PC-3 (cell line): ENCODE measurements at regions of chr9 and their contacts with region 1.

Region 1: DNA sequence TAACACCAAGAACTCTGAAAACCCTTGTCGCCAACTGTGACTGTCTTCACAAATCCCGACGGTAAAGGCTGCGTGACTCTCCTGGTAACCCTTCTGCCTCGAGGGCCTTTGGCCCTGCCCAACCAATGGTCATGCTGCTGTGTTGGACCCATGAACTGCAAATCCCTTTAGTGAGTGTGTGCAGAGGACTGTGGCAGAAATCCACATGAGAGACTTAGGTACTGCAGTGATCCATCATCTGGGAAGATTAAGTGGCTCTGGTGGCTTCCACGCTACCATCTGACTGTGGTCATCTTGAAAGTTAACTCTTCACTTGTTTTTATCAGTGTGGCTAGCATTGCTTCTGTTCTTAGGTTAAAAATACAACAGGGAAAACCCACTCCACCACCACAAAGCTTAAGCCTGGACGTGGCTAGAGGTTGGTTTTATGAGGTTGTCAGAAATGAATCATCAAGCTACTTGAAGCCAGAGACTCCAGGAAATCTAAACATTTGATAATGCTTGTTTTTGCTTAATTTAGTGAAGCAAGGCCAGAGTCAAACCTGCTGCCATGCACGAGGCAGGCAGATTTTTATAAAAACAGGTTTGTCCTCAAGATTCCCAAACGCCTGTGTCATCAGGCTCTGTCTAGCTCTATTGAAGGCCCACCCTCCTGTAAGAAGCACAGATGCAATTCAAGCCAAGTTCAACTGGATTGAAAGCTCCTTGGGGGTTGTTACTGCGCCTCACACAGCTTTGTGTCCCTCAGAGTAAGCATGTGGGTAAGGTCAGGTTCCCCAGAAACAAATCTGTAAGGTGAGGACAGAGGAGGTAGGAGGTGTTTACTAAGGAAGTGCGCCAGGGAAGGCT is 52.7 kb upstream of the ERCC6L2 start:
- DNase-seq: peak; percentile 89
- ATAC-seq: peak; percentile 93
- H3K4me3 ChIP-seq: peak overlapping the region; percentile 26; the same call in 1 of the 2 replicates
- H3K27ac ChIP-seq: peak overlapping the region; percentile 66
- H3K4me1 ChIP-seq: peaks cover 25% of the 10 kb centered on the region
- H3K27me3 ChIP-seq: no peaks in the 10 kb centered on the region
- CTCF ChIP-seq: no peak

Region 2: DNA sequence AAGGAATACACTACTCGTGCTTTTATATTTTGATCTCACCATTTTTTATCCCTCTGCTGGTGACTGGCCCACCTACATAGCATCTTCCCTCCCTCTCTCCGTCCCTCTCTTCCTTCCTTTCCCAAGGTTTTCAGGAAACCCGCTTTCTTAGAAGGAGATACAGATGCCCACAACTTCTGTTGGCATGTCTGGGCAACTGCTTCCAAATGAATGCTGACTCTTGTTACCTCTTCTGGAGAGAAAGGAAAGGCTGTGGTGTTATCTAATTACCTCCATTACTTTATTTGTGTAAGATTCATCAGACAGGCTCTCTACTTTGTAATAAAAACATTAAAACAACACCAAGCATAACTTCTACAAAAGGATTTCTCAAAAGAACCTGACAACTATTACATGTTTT is 525.5 kb before region 1 on chr9:
- CTCF ChIA-PET with region 1: no interaction called
- POLR2A ChIA-PET with region 1: no interaction called
- intact Hi-C with region 1: no loop called
- DNase-seq: no peak
- ATAC-seq: no peak
- H3K4me3 ChIP-seq: no peak overlapping the region
- H3K27ac ChIP-seq: no peak overlapping the region
- H3K4me1 ChIP-seq: no peaks in the 10 kb centered on the region
- H3K27me3 ChIP-seq: no peaks in the 10 kb centered on the region
- CTCF ChIP-seq: no peak

Region 3: DNA sequence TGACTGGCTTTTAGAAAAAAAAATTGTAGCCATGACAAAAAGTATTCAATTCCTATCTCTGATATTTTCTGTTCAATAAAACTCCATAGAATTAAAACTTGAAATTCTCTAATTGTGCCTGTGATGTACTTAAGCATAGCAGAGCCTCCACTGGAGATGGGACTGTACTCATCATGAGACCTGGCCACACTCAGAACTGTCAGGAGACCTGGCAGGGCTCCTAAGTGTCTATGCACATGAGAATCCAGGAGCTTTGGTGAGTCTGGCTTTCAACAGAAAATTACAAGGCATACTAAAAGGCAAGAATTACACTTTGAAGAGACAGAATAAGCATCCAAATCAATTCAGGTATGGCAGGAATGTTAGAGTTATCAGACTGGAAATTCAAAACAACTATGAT is 26.0 kb after region 1 on chr9:
- CTCF ChIA-PET with region 1: no interaction called
- POLR2A ChIA-PET with region 1: no interaction called
- intact Hi-C with region 1: loop called (anchors 1 kb)
- DNase-seq: no peak
- ATAC-seq: no peak
- H3K4me3 ChIP-seq: no peak overlapping the region
- H3K27ac ChIP-seq: no peak overlapping the region
- H3K4me1 ChIP-seq: peaks cover 23% of the 10 kb centered on the region
- H3K27me3 ChIP-seq: no peaks in the 10 kb centered on the region
- CTCF ChIP-seq: no peak

Region 4: DNA sequence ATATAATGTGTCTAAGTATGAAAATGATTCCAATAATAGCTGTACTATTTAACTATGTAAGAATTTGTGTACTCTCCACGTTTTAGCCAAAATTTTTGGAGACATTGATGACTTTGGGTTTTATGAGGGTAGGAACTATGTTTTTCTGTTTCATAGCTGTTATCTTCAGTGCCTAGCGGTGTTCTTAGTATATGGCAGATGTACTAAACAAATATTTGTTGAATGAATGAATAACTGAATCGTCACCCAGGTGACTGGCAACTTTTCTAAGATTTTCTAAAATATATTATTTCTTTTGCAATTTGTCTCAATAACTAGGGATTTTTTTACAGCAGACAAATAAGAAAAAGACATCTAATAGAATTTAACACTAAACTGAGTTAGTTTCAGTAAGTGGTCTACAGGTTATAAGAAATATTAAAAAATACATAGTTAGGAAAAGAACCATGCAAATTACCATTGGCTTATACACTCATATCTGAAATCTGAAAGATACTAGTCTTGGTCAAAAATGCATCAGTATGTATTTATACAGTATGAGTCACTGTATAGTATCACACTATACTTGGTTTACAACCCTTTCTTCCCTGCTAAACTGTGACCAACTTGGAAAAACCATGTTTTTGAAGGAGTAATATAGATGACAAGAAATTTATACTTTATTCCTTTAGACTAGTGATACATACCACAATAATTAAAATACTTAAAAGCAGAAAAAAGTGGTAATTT is 42.2 kb after region 1 on chr9:
- CTCF ChIA-PET with region 1: no interaction called
- POLR2A ChIA-PET with region 1: no interaction called
- intact Hi-C with region 1: loop called (anchors 2 kb)
- DNase-seq: peak; percentile 58
- ATAC-seq: peak; percentile 98
- H3K4me3 ChIP-seq: no peak overlapping the region
- H3K27ac ChIP-seq: peak overlapping the region; percentile 60
- H3K4me1 ChIP-seq: peaks cover 14% of the 10 kb centered on the region
- H3K27me3 ChIP-seq: no peaks in the 10 kb centered on the region
- CTCF ChIP-seq: no peak